ENCODE measurements at regions of chr1 and their contacts with region 1.

Region 1: GRCh38 chr1:150363426-150364230 is at the start of gene RPRD2:
- DNase-seq: peak; percentile 90
- ATAC-seq: peak; percentile 93
- H3K4me3 Mint-ChIP-seq: peak within 1 kb of the TSS; percentile 95
- H3K27ac Mint-ChIP-seq: peak within 1 kb of the TSS; percentile 98
- H3K4me1 Mint-ChIP-seq: peaks cover 37% of the 10 kb centered on the region
- H3K27me3 Mint-ChIP-seq: no peaks in the 10 kb centered on the region
- CTCF ChIP-seq: no peak
- total RNA-seq, gene RPRD2: 27.1 and 28.6 TPM in 2 replicates

Region 2: GRCh38 chr1:149886396-149887195 is 477.0 kb before region 1 on chr1:
- CTCF ChIA-PET with region 1: no interaction called
- POLR2A ChIA-PET with region 1: interaction called, 35 read pairs
- intact Hi-C with region 1: no loop called
- DNase-seq: peak; percentile 74
- ATAC-seq: peak; percentile 69
- H3K4me3 Mint-ChIP-seq: no peak overlapping the region
- H3K27ac Mint-ChIP-seq: no peak overlapping the region
- H3K4me1 Mint-ChIP-seq: peaks cover 2% of the 10 kb centered on the region
- H3K27me3 Mint-ChIP-seq: no peaks in the 10 kb centered on the region
- CTCF ChIP-seq: no peak

Region 3: DNA sequence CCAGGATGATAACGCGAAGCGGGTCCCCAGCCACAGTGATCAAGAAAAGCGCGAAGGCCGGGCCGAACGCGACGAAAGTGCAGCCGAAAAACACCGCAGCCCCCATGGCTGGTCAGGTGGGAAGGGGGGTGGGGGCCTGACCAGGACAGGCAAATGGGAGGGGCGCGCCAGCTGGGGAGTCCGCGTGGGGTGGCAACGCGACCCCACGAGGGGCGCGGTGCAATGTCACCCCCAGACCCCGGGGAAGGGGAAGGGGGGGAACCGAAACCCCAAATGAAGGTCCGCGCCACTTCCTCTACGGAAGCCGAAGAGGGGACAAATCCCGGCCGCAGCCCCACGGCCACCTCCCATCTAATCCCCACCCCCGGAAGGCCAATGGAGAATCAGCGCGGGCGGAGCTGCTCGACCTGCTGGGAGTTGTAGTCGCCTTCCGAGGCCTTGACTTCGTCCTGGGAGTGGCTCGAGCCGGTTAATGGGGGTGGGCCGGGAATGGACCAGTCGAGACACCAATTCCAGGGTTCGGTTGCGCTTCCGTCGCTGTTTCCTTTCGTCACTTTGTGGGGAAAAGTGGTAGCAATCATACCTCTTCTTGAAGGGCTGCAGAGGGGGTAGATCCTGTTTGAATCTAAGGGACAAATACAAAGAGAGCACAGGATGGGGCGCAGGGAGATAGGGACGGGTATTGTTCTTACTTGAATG is 94.8 kb before region 1 on chr1 and contains the start of gene APH1A:
- CTCF ChIA-PET with region 1: no interaction called
- POLR2A ChIA-PET with region 1: interaction called, 14 read pairs
- intact Hi-C with region 1: loop called (anchors 5 kb)
- DNase-seq: peak; percentile 86
- ATAC-seq: peak; percentile 97
- H3K4me3 Mint-ChIP-seq: peak within 1 kb of the TSS; percentile 100
- H3K27ac Mint-ChIP-seq: peak within 1 kb of the TSS; percentile 94
- H3K4me1 Mint-ChIP-seq: peaks cover 32% of the 10 kb centered on the region
- H3K27me3 Mint-ChIP-seq: peaks cover 4% of the 10 kb centered on the region
- CTCF ChIP-seq: no peak
- total RNA-seq, gene APH1A: 145 TPM in 2 replicates

Region 4: DNA sequence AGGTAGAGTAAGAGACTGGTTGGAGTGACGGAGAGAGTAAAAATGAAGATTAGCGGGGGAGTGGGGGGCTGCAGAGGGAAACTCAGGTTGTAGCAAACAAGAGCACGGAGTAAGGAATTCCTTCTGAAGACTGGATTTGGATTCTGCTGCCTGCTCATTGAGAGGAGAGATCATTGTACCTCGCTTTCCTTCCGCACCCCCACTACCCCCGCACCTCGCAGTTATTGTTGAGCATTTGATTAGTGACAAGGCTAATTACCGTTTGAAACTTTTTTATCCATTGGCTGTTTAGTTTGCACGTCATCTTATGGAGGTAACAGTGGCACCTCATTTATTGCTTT is 41.8 kb before region 1 on chr1:
- CTCF ChIA-PET with region 1: no interaction called
- POLR2A ChIA-PET with region 1: interaction called, 20 read pairs
- intact Hi-C with region 1: loop called (anchors 1 kb)
- DNase-seq: no peak
- ATAC-seq: no peak
- H3K4me3 Mint-ChIP-seq: peak overlapping the region; percentile 100
- H3K27ac Mint-ChIP-seq: peak overlapping the region; percentile 99
- H3K4me1 Mint-ChIP-seq: peaks cover 22% of the 10 kb centered on the region
- H3K27me3 Mint-ChIP-seq: peaks cover 2% of the 10 kb centered on the region
- CTCF ChIP-seq: no peak

Region 5: DNA sequence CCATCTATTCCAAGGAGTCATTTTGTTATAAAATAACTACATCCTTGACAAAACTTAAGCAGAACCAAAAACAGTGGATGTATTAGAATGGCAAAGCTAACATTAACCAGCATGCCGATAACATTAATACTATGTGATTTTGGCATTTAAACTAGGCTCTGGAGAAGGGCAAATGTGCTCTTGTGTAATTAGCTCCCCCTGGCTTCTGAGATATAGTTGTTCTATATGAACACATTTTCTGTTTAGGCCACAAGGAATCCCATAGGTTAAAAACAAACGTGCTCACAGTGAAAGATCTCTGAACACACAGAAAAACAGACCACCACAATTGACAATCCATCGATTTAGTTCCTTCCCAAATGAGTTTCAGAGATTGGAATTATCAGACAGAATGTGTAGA is 66.2 kb after region 1 on chr1:
- CTCF ChIA-PET with region 1: interaction called, 4 read pairs
- POLR2A ChIA-PET with region 1: interaction called, 15 read pairs
- intact Hi-C with region 1: loop called (anchors 10 kb)
- DNase-seq: no peak
- ATAC-seq: no peak
- H3K4me3 Mint-ChIP-seq: no peak overlapping the region
- H3K27ac Mint-ChIP-seq: no peak overlapping the region
- H3K4me1 Mint-ChIP-seq: peaks cover 2% of the 10 kb centered on the region
- H3K27me3 Mint-ChIP-seq: no peaks in the 10 kb centered on the region
- CTCF ChIP-seq: no peak

Region 6: DNA sequence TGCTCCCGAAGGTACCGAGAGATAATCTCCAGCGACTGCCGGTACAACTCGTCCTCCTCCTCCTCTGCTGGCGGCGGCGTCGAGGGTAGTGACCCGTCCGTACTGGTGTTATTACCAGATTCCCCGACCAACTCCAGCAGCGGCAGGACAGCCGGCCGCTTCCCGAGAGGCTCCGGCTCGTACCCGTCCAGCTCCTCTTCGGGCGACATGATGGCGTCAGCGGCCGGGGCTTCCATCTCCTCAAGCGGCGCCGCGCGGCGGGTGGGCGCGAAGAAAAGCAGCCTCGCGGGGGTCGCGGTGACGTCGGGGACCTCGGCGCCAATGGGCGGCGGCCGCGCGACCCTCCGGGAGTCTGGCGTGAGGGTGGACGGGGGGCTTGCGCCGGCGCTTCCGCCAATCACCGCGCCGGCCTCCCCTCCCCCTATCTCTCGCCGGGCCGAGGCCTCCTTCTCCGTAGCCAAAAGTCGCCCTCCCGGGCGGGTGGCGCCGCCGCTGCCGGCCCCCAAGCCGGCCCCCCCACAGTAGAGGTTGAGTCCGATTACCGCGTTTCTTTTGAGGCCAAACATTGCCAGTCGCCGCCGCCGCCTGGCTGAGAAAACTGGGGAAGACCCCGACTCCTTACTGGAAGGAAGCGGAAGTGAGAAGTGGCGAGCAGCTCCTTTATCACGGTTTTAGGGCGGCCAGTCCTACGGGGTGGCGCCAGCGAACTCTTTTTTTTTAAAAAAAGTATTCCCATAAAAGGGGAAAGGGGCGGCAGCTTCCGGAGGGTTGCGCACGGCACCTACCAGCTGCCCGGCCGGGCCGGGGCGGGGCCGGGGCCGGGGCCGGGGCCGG is 215.6 kb after region 1 on chr1 and contains the start of gene MCL1:
- CTCF ChIA-PET with region 1: no interaction called
- POLR2A ChIA-PET with region 1: interaction called, 18 read pairs
- intact Hi-C with region 1: no loop called
- DNase-seq: peak; percentile 81
- ATAC-seq: peak; percentile 82
- H3K4me3 Mint-ChIP-seq: peak within 1 kb of the TSS; percentile 95
- H3K27ac Mint-ChIP-seq: peak within 1 kb of the TSS; percentile 98
- H3K4me1 Mint-ChIP-seq: peaks cover 49% of the 10 kb centered on the region
- H3K27me3 Mint-ChIP-seq: no peaks in the 10 kb centered on the region
- CTCF ChIP-seq: no peak
- total RNA-seq, gene MCL1: 224 and 233 TPM in 2 replicates

Region 7: GRCh38 chr1:151024540-151025146 is 661.0 kb after region 1 on chr1:
- CTCF ChIA-PET with region 1: no interaction called
- POLR2A ChIA-PET with region 1: interaction called, 12 read pairs
- intact Hi-C with region 1: no loop called
- DNase-seq: peak; percentile 55
- ATAC-seq: peak; percentile 99
- H3K4me3 Mint-ChIP-seq: no peak overlapping the region
- H3K27ac Mint-ChIP-seq: no peak overlapping the region
- H3K4me1 Mint-ChIP-seq: peaks cover 6% of the 10 kb centered on the region
- H3K27me3 Mint-ChIP-seq: no peaks in the 10 kb centered on the region
- CTCF ChIP-seq: no peak

Measured in activated B cell treated with CpG ODN at 0.5 μM for 24 hours (primary cell).